SK-N-SH (cell line): ENCODE measurements at regions of chr14 and their contacts with region 1.

Region 1: GRCh38 chr14:105294142-105294597 is 6.6 kb downstream of the BRF1 start:
- DNase-seq: peak; percentile 91
- H3K4me3 ChIP-seq: no peak overlapping the region
- H3K27ac ChIP-seq: peak overlapping the region; percentile 41 to 98; a peak in 3 of 4 replicates
- H3K4me1 ChIP-seq: peaks cover 0 to 44% of the 10 kb centered on the region in 2 experiments; a peak in 3 of 4 replicates
- H3K27me3 ChIP-seq: no peaks in the 10 kb centered on the region
- CTCF ChIP-seq: no peak
- EP300 ChIP-seq: peak in 1 of 2 experiments; percentile 82; a peak in 2 of 4 replicates
- RAD21 ChIP-seq: peak; percentile 26; the same call in 1 of the 2 replicates

Region 2: GRCh38 chr14:105273057-105273456 is 21.1 kb before region 1 on chr14:
- CTCF ChIA-PET with region 1: interaction called, 15 read pairs
- POLR2A ChIA-PET with region 1: no interaction called
- DNase-seq: no peak
- H3K4me3 ChIP-seq: no peak overlapping the region
- H3K27ac ChIP-seq: no peak overlapping the region
- H3K4me1 ChIP-seq: peaks cover 0 to 23% of the 10 kb centered on the region in 2 experiments; a peak in 1 of 4 replicates
- H3K27me3 ChIP-seq: no peaks in the 10 kb centered on the region
- CTCF ChIP-seq: no peak
- EP300 ChIP-seq: no peak
- RAD21 ChIP-seq: no peak

Region 3: DNA sequence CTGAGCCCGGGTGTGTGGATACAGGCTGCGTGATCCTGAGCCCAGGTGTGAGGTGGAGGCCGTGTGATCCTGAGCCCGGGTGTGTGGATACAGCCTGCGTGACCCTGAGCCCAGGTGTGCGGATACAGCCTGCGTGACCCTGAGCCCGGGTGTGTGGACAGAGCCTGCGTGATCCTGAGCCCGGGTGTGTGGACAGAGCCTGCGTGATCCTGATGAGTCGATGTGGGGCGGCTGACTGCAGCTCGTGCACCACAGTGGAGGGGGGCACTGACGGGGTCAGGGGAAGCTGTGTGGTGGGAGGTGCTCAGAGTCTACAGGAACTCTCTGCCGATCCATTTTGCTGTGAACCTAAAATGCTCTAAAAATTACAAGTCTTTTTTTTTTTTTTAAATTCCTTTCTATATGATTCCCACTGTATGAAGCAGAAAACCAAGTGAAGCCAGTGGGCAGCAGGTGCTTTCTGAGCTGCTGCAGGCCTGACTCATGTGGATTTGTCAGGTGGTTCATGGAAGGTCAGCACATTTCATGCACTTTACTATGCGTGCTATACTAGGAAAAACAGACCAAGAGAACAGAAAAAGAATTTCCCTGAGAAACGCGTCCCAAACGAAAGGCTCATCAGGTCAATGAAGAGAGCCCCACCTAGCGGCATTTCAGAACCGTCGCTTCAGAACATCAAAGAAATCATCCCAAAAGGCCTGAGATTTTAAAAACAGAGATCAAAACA is 12.6 kb before region 1 on chr14:
- CTCF ChIA-PET with region 1: interaction called, 10 read pairs
- POLR2A ChIA-PET with region 1: no interaction called
- DNase-seq: peak; percentile 70
- H3K4me3 ChIP-seq: no peak overlapping the region; a peak in 1 of 4 replicates
- H3K27ac ChIP-seq: no peak overlapping the region; a peak in 1 of 4 replicates
- H3K4me1 ChIP-seq: peaks cover 0 to 5% of the 10 kb centered on the region in 2 experiments; a peak in 1 of 4 replicates
- H3K27me3 ChIP-seq: no peaks in the 10 kb centered on the region
- CTCF ChIP-seq: peak; percentile 23; the same call in 1 of the 2 replicates
- EP300 ChIP-seq: no peak
- RAD21 ChIP-seq: peak; percentile 76

Region 4: GRCh38 chr14:105602799-105603793 is 308.9 kb after region 1 on chr14:
- CTCF ChIA-PET with region 1: no interaction called
- POLR2A ChIA-PET with region 1: no interaction called
- DNase-seq: no peak
- H3K4me3 ChIP-seq: no peak overlapping the region
- H3K27ac ChIP-seq: no peak overlapping the region
- H3K4me1 ChIP-seq: no peaks in the 10 kb centered on the region
- H3K27me3 ChIP-seq: no peaks in the 10 kb centered on the region
- CTCF ChIP-seq: no peak
- EP300 ChIP-seq: no peak
- RAD21 ChIP-seq: no peak